Calu3 (cell line): ENCODE measurements at regions of chr9 and their contacts with region 1.

Region 1: GRCh38 chr9:87336914-87337333 is 160.7 kb upstream of the DAPK1 start:
- DNase-seq: peak; percentile 51
- H3K4me3 Mint-ChIP-seq: peak overlapping the region; percentile 68
- H3K27ac Mint-ChIP-seq: peak overlapping the region; percentile 87
- H3K4me1 Mint-ChIP-seq: peaks cover 18% of the 10 kb centered on the region
- H3K27me3 Mint-ChIP-seq: no peaks in the 10 kb centered on the region
- CTCF ChIP-seq: no peak

Region 2: GRCh38 chr9:87375397-87376073 is 38.6 kb after region 1 on chr9:
- CTCF ChIA-PET with region 1: no interaction called
- intact Hi-C with region 1: loop called (anchors 5 kb)
- DNase-seq: peak; percentile 6
- H3K4me3 Mint-ChIP-seq: no peak overlapping the region
- H3K27ac Mint-ChIP-seq: no peak overlapping the region
- H3K4me1 Mint-ChIP-seq: peaks cover 51% of the 10 kb centered on the region
- H3K27me3 Mint-ChIP-seq: no peaks in the 10 kb centered on the region
- CTCF ChIP-seq: no peak

Region 3: GRCh38 chr9:87405677-87406542 is 69.0 kb after region 1 on chr9:
- CTCF ChIA-PET with region 1: interaction called, 4 read pairs
- intact Hi-C with region 1: loop called (anchors 5 kb)
- DNase-seq: peak; percentile 41
- H3K4me3 Mint-ChIP-seq: peak overlapping the region; percentile 19
- H3K27ac Mint-ChIP-seq: peak overlapping the region; percentile 98
- H3K4me1 Mint-ChIP-seq: peaks cover 47% of the 10 kb centered on the region
- H3K27me3 Mint-ChIP-seq: no peaks in the 10 kb centered on the region
- CTCF ChIP-seq: no peak

Region 4: DNA sequence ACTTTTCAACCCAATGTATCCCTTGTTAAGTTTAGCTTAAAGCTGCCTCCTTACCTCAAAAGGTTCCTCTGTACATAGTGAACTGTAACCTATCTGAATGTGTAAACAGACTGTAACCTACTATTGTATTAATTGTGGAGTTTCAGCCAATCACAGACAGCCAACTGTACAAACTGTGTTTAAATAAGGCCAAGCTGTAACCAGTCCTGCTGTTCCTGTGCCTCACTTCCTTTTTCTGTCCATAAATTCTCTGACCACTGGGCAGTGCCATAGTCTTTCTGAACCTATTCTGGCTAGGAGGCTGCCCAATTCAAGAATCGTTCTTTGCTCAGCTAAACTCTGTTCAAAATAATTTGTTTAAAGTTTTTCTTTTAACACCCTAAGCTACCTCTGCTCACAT is 86.1 kb after region 1 on chr9:
- CTCF ChIA-PET with region 1: interaction called, 4 read pairs
- intact Hi-C with region 1: loop called (anchors 2 kb)
- DNase-seq: no peak
- H3K4me3 Mint-ChIP-seq: no peak overlapping the region
- H3K27ac Mint-ChIP-seq: peak overlapping the region; percentile 77
- H3K4me1 Mint-ChIP-seq: peaks cover 14% of the 10 kb centered on the region
- H3K27me3 Mint-ChIP-seq: no peaks in the 10 kb centered on the region
- CTCF ChIP-seq: no peak

Region 5: GRCh38 chr9:87502436-87503221 is 165.7 kb after region 1 on chr9:
- CTCF ChIA-PET with region 1: interaction called, 5 read pairs
- intact Hi-C with region 1: loop called (anchors 2 kb)
- DNase-seq: peak; percentile 39
- H3K4me3 Mint-ChIP-seq: peak overlapping the region; percentile 49
- H3K27ac Mint-ChIP-seq: peak overlapping the region; percentile 77
- H3K4me1 Mint-ChIP-seq: peaks cover 48% of the 10 kb centered on the region
- H3K27me3 Mint-ChIP-seq: no peaks in the 10 kb centered on the region
- CTCF ChIP-seq: no peak

Region 6: DNA sequence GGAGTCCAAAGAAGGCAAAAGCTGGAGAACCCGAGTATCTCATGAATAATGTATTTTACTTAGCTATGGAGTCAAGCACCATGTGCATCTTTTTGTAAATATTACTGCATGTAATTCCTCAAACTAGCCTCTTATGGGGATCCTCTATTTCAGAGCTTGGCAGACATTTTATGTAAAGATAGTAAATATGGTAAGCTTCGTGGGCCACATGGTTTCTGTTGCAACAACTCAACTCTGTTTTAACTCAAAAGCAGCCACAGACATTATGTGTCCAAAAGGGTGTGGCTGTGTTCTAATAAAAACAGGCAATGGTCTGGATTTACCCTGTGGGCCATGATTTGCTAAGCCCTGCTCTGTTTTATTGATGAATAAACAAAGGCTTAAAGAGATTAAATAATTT is 178.1 kb after region 1 on chr9:
- CTCF ChIA-PET with region 1: no interaction called
- intact Hi-C with region 1: no loop called
- DNase-seq: no peak
- H3K4me3 Mint-ChIP-seq: no peak overlapping the region
- H3K27ac Mint-ChIP-seq: peak overlapping the region; percentile 25
- H3K4me1 Mint-ChIP-seq: peaks cover 74% of the 10 kb centered on the region
- H3K27me3 Mint-ChIP-seq: no peaks in the 10 kb centered on the region
- CTCF ChIP-seq: no peak

Region 7: DNA sequence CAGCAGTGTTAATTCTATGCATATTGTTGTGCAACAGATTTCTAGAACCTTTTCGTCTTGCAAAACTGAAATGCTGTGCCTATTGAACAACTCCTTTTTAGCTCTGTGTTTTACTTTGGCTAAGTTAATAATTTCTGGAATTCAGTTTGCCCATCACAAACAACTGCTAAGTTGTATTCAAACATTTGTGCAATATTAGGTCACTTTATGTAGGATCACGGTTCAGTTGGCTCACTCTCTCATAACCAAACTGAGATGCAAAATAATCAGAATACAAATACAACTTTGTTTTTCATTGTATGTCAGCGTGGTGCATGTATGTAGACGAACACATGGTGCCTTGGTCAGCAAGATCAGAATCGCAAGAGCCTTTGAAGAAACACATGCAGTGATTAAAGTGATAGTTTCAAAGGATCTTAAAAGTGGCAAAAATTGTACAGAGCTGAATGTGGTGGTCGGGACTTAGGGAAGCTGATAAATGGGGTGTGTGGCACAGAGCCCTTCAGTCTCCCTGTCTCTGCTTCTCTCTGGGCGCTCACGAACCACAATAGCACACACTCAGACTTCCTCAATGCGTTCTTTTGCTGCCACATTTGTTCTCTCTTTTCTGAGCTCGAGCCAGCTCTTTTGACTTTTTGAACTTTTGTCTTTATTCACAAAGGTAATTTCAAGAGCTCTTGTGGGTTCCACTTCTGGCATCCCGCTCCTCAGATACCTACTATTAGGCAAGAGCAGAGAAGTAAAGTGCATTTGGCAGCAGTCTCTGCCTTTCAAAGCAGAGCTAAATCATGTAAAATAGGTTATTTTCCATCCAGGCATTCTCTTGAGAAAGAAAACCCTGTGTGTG is 276.6 kb after region 1 on chr9:
- CTCF ChIA-PET with region 1: no interaction called
- intact Hi-C with region 1: loop called (anchors 10 kb)
- DNase-seq: no peak
- H3K4me3 Mint-ChIP-seq: peak overlapping the region; percentile 39
- H3K27ac Mint-ChIP-seq: peak overlapping the region; percentile 86
- H3K4me1 Mint-ChIP-seq: peaks cover 56% of the 10 kb centered on the region
- H3K27me3 Mint-ChIP-seq: no peaks in the 10 kb centered on the region
- CTCF ChIP-seq: no peak

Region 8: DNA sequence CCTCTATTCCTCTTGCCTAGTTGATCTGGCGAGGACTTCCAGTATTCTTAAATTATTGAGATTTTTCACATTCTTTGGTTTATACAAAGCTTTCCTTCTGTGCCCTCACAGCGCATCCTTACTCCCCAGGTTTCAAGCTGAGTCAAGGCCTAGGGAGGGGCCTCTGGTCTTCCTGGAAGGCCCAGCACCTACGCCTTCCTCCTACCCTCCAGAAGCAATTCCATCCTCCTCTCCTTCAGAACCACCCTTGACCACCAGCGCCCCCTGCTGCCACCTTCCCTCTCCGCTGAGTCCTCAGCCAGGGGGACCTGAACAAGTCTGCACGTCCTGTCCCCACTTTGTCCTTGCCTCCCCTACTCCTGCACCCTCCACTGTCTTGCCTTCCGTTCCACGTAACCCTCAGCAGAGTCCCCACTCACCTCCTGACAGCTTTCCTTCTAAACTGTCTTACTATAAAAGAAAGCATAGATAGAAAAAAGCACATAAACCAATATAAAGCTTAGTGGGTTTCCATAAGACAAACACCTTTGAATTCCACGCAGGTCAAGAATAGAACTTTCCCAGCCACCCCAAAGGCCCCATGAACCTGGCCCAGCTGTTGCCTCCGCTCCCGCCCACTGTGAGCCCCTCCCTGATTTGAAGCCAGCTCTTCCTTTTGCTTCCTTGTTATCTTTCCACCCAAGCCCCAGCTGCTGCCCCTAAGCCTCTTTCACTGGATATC is 326.0 kb after region 1 on chr9:
- CTCF ChIA-PET with region 1: interaction called, 3 read pairs
- intact Hi-C with region 1: loop called (anchors 2 kb)
- DNase-seq: peak; percentile 87
- H3K4me3 Mint-ChIP-seq: no peak overlapping the region
- H3K27ac Mint-ChIP-seq: peak overlapping the region; percentile 47
- H3K4me1 Mint-ChIP-seq: peaks cover 22% of the 10 kb centered on the region
- H3K27me3 Mint-ChIP-seq: no peaks in the 10 kb centered on the region
- CTCF ChIP-seq: peak; percentile 64